Activated T-helper 1 cell treated with anti-CD3 and anti-CD28 coated beads, Interleukin-12 subunit alpha, Interleukin-12 subunit beta, Interleukin-2, Interleukin-4 antibody, amounts not matched to agents 30 ng/mL and 10 ng/mL and 1 ng/mL, durations not matched to agents 14 hours and 24 hours and 36 hours (primary cell): ENCODE measurements at regions of chr11 and their contacts with region 1.

Region 1: DNA sequence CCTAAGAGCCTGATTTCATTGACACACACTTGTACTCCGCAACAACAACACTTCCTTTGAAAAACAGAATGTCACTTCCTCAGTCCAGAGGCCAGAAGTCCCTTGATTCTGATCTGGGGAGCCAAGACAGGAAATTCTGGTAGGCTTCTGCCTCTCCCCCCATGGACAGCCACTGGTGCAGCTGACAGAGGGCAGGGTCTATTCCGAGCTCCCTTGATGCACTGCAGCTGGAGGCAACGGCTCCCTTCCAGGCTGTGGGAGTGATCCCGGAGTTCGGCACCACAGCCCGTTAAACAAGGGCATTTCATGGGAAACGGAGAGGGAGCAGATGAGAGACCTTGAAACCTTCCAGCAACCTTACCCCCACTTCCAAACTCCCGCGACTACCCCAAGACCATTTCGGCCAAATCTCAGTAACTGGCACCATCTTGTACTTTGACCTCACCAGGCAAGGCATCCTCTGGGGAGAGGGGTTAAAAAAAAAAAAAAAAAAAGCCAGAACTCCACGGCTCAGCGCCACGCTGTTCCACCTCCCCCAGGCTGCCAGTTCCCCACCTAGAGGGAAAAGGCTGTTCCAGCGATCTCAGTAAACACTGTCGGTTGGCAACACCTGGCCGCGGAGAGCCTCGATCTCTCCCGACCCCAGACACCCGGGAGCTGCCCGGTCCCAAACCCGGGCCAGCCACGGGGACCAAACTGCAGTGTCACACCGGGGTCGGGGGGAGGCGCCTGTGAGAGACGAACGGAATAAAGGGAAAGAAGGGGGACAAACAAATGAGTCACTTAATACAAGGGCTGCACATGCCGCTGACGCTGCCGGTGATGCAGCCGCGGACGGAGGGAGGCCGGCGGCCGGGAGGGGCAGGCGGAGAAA is 1.1 kb downstream of the GAB2 start:
- DNase-seq: peak; percentile 78
- H3K4me3 Mint-ChIP-seq: peak overlapping the region; percentile 97
- H3K27ac Mint-ChIP-seq: peak overlapping the region; percentile 92
- H3K4me1 Mint-ChIP-seq: peaks cover 64% of the 10 kb centered on the region
- H3K27me3 Mint-ChIP-seq: peaks cover 8% of the 10 kb centered on the region

Region 2: GRCh38 chr11:78022397-78023396 is 393.8 kb before region 1 on chr11 and contains the start of gene KCTD14:
- intact Hi-C with region 1: no loop called
- DNase-seq: no peak
- H3K4me3 Mint-ChIP-seq: no peak within 1 kb of the TSS
- H3K27ac Mint-ChIP-seq: no peak within 1 kb of the TSS
- H3K4me1 Mint-ChIP-seq: no peaks in the 10 kb centered on the region
- H3K27me3 Mint-ChIP-seq: peaks cover 19% of the 10 kb centered on the region
- total RNA-seq, gene KCTD14: 0.16 and 0.49 TPM in 2 replicates

Region 3: DNA sequence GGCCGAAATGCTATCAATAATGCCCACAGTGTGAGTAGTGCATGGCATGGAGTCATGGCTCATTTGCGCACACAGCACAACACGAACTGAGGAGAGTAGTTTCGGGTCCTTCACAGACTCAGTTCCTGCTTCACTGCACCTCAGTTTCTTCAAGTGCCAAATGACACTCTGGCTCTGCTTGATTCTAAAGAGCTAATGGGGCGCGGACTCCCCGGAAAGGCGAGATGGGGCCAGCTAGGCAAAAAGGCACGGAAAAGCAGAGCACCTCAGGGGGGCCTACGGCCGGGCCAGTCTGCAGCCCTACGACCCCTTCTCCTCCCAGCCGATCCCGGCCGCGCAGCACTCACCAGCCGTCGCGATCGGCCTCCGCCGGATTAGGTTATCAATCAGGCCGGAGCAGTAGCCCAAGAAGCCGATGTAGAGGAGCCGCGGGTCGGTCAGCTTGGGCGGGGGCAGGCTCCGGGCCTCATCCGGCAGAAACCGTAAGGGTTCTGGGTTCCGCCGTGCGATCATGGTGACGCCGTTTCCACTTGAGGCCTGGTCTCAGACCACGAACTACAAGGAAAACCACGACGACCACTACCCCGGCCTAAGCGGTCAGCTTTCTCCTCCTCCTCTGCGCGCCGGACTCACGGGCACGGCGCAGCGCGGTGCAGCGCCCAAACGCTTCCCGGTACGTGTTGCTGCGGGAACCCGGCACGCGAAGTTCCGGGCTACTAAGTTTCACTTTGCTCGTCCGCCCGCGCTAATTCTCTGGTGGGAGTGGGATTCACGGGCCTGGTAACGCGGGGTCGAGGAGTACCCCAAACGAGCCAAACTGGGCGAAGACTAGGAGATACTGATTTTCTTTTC is 337.1 kb before region 1 on chr11 and contains the start of gene NDUFC2:
- intact Hi-C with region 1: loop called (anchors 5 kb)
- DNase-seq: peak; percentile 62
- H3K4me3 Mint-ChIP-seq: peak within 1 kb of the TSS; percentile 95
- H3K27ac Mint-ChIP-seq: peak within 1 kb of the TSS; percentile 86
- H3K4me1 Mint-ChIP-seq: peaks cover 53% of the 10 kb centered on the region
- H3K27me3 Mint-ChIP-seq: no peaks in the 10 kb centered on the region
- total RNA-seq, gene NDUFC2: 208 and 220 TPM in 2 replicates

Region 4: DNA sequence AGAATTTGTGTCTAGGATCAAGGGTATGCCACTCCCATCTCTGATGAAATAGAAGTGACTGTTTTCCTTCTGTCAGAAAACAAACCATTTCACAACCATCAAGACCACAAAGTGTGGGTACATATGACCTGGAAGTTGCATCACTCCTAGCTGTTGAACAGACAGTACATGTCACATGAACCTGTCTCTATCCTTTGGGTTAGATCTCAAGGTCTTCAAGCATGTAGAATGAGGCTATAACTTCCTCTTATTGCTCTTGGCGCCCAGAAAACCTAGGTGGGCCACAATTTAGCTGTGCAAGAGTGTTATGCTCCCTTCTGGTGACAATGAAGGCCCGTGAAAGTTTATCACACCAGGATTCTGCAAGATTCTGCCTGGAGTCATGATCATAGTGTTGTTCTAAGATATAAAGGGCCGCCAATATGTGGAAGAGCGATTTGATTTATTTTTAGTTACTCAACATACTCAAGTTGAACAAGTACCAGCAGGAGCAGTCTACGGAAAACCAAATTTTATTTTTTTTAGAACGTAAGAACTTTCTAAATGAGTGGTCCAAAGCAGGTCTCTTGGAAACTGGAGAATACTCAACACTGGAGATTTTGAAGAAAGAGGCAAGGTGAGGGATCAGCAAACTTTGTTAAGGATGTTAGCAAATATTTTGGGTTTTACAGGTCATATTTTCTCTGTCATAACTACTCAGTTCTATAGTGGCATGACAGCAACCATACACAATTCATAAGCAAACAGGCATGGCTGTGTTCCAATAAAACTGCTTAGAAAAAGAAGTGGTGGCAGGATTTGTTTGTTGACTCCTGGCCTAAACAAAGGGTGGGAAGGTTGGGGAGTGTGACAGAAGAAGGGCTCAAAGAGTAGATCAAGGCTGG is 126.0 kb before region 1 on chr11:
- intact Hi-C with region 1: loop called (anchors 1 kb)
- DNase-seq: peak; percentile 54
- H3K4me3 Mint-ChIP-seq: peak overlapping the region; percentile 73
- H3K27ac Mint-ChIP-seq: peak overlapping the region; percentile 92
- H3K4me1 Mint-ChIP-seq: peaks cover 68% of the 10 kb centered on the region
- H3K27me3 Mint-ChIP-seq: no peaks in the 10 kb centered on the region

Region 5: GRCh38 chr11:78397387-78397786 is 19.2 kb before region 1 on chr11:
- intact Hi-C with region 1: loop called (anchors 2 kb)
- DNase-seq: no peak
- H3K4me3 Mint-ChIP-seq: no peak overlapping the region
- H3K27ac Mint-ChIP-seq: peak overlapping the region; percentile 4
- H3K4me1 Mint-ChIP-seq: peaks cover 54% of the 10 kb centered on the region
- H3K27me3 Mint-ChIP-seq: no peaks in the 10 kb centered on the region

Region 6: GRCh38 chr11:78564490-78565467 is 148.2 kb after region 1 on chr11:
- intact Hi-C with region 1: loop called (anchors 1 kb)
- DNase-seq: peak; percentile 31
- H3K4me3 Mint-ChIP-seq: no peak overlapping the region
- H3K27ac Mint-ChIP-seq: peak overlapping the region; percentile 81
- H3K4me1 Mint-ChIP-seq: peaks cover 50% of the 10 kb centered on the region
- H3K27me3 Mint-ChIP-seq: no peaks in the 10 kb centered on the region

Region 7: GRCh38 chr11:78622666-78623065 is 206.1 kb after region 1 on chr11:
- intact Hi-C with region 1: no loop called
- DNase-seq: no peak
- H3K4me3 Mint-ChIP-seq: no peak overlapping the region
- H3K27ac Mint-ChIP-seq: no peak overlapping the region
- H3K4me1 Mint-ChIP-seq: no peaks in the 10 kb centered on the region
- H3K27me3 Mint-ChIP-seq: no peaks in the 10 kb centered on the region